BJ (cell line): ENCODE measurements at regions of chr7 and their contacts with region 1.

Region 1: DNA sequence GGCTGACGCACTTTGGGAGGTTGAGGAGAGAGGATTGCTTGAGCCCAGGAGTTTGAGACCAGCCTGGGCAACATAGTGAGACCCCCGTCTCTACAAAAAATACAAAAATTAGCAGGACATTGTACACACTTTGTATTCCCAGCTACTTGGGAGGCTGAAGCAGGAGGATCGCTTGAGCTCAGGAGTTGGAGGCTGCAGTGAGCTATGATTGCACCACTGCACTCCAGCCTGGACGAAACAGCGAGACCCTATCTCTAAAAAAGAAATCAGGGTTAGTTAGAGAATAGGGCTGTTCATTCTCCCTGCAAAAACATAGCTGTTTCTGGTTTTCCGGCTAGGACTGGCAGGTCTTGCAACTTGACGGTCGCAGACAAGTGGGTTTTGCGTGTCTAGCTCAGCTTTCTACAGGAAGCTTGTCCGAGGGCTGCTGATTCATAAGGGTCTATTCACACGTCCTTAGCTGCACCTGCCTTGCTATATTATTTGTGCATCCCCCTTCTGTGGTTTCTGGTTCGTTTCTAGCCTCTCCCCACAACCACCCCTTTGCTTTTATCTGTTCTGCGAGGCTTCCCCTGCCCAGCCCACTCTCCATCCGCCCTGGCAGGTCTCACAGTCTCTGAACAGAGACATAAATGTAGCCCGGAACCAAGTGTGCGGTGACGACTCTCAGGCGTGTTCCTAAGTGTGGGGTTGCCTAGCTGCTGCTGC is 10.7 kb downstream of the AMZ1 start:
- DNase-seq: no peak
- H3K4me3 ChIP-seq: no peak overlapping the region
- H3K27me3 ChIP-seq: no peaks in the 10 kb centered on the region
- CTCF ChIP-seq: no peak

Region 2: GRCh38 chr7:2022737-2023250 is 675.9 kb before region 1 on chr7:
- CTCF ChIA-PET with region 1: no interaction called
- POLR2A ChIA-PET with region 1: interaction called, 10 read pairs
- DNase-seq: no peak
- H3K4me3 ChIP-seq: no peak overlapping the region
- H3K27me3 ChIP-seq: no peaks in the 10 kb centered on the region
- CTCF ChIP-seq: no peak